Naive thymus-derived CD4-positive, alpha-beta T cell (primary cell): ENCODE measurements at regions of chr9 and their contacts with region 1.

Region 1: DNA sequence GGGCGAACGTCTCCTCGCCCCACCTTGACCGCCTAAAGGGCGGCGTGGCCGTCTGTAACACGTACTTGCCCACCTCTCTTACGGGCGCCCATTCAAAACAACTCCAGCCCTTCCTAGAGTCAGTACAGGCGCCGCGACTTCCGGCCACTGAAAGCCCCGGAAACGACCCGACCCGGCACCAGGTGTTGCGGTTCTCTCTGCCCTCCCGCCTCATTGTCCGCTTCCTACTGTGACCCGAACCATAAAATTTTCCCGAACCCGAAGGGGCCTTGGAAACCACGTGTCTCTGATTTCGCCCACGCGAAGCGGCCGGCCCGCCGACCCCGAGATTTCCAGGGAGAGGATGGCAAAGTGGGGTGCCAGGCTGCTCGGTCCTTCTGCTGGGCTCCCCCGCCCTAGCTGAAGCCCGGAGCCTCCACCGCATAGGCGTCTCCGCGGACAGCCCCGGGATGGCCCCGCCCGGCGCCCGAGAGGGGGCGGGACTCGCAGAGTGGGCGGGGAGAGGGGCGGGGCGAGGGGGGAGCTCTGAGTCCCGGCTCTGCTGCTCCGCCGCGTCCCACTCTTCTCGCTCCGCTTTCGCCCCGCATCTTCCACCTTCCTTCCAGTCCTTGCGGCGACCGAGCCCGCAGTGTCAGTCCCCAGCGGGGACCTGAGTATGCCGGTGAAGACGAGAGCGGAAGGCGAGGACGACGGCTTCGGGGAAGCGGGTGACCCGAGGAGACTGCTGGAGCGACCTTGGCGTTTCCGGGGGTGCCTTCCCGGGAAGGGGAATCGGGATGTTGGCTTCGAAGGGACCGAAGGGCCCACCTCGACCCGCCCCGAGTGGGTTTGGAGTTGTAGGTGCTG is 684 bp upstream of the PTGES2 start:
- DNase-seq: peak; percentile 81 to 96 (median 93)
- ATAC-seq: peak; percentile 89
- H3K4me3 ChIP-seq: peak overlapping the region; percentile 99
- H3K4me3 Mint-ChIP-seq: peak overlapping the region; percentile 93 to 99 (median 98)
- H3K27ac ChIP-seq: peak overlapping the region; percentile 98
- H3K27ac Mint-ChIP-seq: peak overlapping the region; percentile 97 to 100 (median 99)
- H3K4me1 ChIP-seq: peaks cover 16 to 20% of the 10 kb centered on the region in 2 donors
- H3K4me1 Mint-ChIP-seq: peaks cover 22 to 44% (median 35%) of the 10 kb centered on the region in 7 donors
- H3K27me3 ChIP-seq: no peaks in the 10 kb centered on the region
- H3K27me3 Mint-ChIP-seq: peaks cover 0 to 24% (median 3%) of the 10 kb centered on the region in 5 donors

Region 2: GRCh38 chr9:127770905-127771569 is 357.2 kb before region 1 on chr9:
- CTCF ChIA-PET with region 1: no interaction called
- POLR2A ChIA-PET with region 1: no interaction called
- intact Hi-C with region 1: loop called in 1 of 2 experiments (anchors 10 kb)
- DNase-seq: peak; percentile 85 to 99 (median 92)
- ATAC-seq: peak; percentile 92
- H3K4me3 ChIP-seq: peak overlapping the region; percentile 71
- H3K4me3 Mint-ChIP-seq: peak overlapping the region; percentile 74 to 92 (median 86)
- H3K27ac ChIP-seq: peak overlapping the region; percentile 90
- H3K27ac Mint-ChIP-seq: peak overlapping the region; percentile 90 to 96 (median 94)
- H3K4me1 ChIP-seq: peaks cover 57 to 59% of the 10 kb centered on the region in 2 donors
- H3K4me1 Mint-ChIP-seq: peaks cover 44 to 82% (median 71%) of the 10 kb centered on the region in 7 donors
- H3K27me3 ChIP-seq: no peaks in the 10 kb centered on the region
- H3K27me3 Mint-ChIP-seq: no peaks in the 10 kb centered on the region

Region 3: GRCh38 chr9:127970401-127971313 is 157.6 kb before region 1 on chr9:
- CTCF ChIA-PET with region 1: no interaction called
- POLR2A ChIA-PET with region 1: no interaction called
- intact Hi-C with region 1: loop called in 1 of 2 experiments (anchors 2 kb)
- DNase-seq: peak in 8 of 9 donors; percentile 68 to 84 (median 80)
- ATAC-seq: peak; percentile 72
- H3K4me3 ChIP-seq: peak overlapping the region; percentile 93
- H3K4me3 Mint-ChIP-seq: peak overlapping the region; percentile 89 to 99 (median 96)
- H3K27ac ChIP-seq: peak overlapping the region; percentile 84
- H3K27ac Mint-ChIP-seq: peak overlapping the region; percentile 90 to 99 (median 97)
- H3K4me1 ChIP-seq: peaks cover 61 to 93% of the 10 kb centered on the region in 2 donors
- H3K4me1 Mint-ChIP-seq: peaks cover 69 to 95% (median 83%) of the 10 kb centered on the region in 7 donors
- H3K27me3 ChIP-seq: no peaks in the 10 kb centered on the region
- H3K27me3 Mint-ChIP-seq: no peaks in the 10 kb centered on the region

Region 4: GRCh38 chr9:128149001-128149701 is 20.9 kb after region 1 on chr9 and contains the start of gene LCN2:
- CTCF ChIA-PET with region 1: no interaction called
- POLR2A ChIA-PET with region 1: no interaction called
- intact Hi-C with region 1: no loop called
- DNase-seq: no peak
- ATAC-seq: no peak
- H3K4me3 ChIP-seq: no peak within 1 kb of the TSS
- H3K4me3 Mint-ChIP-seq: no peak within 1 kb of the TSS
- H3K27ac ChIP-seq: no peak within 1 kb of the TSS
- H3K27ac Mint-ChIP-seq: peak within 1 kb of the TSS in 3 of 9 donors; percentile 38 to 62 (median 40)
- H3K4me1 ChIP-seq: no peaks in the 10 kb centered on the region
- H3K4me1 Mint-ChIP-seq: peaks cover 0 to 7% (median 4%) of the 10 kb centered on the region in 7 donors
- H3K27me3 ChIP-seq: no peaks in the 10 kb centered on the region
- H3K27me3 Mint-ChIP-seq: peaks cover 0 to 4% (median 0%) of the 10 kb centered on the region in 5 donors
- total RNA-seq, gene LCN2: not detected

Region 5: DNA sequence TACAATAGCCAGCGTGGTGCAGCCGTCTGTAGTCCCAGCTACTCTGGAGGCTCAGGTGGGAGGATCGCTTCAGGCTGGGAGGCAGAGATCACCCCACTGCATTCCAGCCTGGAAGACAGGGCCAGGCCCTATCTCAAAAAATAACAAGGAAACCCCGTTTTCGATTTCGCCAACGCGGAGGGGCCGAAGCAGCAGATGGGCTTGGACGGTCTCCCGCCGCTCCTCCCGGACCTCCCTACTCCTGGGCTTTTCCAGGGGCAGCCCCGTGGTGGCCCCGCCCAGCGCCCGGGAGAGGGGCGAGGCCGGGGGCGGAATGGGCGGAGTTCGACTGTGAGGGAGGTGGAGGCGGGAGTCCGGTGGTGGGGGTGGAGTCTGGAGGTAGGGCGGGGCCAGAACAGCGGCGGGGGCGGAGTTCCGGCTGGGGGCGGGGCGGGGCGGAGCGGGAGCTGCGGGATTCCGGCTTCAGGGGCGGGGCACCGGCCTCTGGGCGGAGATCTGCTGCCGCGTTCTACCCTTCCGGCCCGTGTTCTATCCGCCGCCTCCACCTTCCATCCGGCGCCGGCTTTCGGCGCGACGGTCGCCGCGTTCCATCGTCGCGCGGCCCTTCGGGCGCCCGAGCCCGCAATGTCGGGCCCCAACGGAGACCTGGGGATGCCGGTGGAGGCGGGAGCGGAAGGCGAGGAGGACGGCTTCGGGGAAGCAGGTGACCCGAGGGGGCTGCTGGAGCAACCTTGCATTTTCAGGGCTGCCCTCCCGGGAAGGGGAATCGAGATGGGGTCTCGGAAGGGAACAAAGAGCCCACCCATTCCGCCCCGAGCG is 31.8 kb after region 1 on chr9 and contains the start of gene BBLN:
- CTCF ChIA-PET with region 1: interaction called, 3 read pairs
- POLR2A ChIA-PET with region 1: interaction called, 27 read pairs
- intact Hi-C with region 1: loop called (anchors 1 kb)
- DNase-seq: peak; percentile 78 to 94 (median 87)
- ATAC-seq: peak; percentile 94
- H3K4me3 ChIP-seq: peak within 1 kb of the TSS; percentile 97
- H3K4me3 Mint-ChIP-seq: peak within 1 kb of the TSS; percentile 79 to 90 (median 82)
- H3K27ac ChIP-seq: peak within 1 kb of the TSS; percentile 78
- H3K27ac Mint-ChIP-seq: peak within 1 kb of the TSS; percentile 84 to 95 (median 93)
- H3K4me1 ChIP-seq: peaks cover 11 to 12% of the 10 kb centered on the region in 2 donors
- H3K4me1 Mint-ChIP-seq: peaks cover 0 to 28% (median 21%) of the 10 kb centered on the region in 7 donors
- H3K27me3 ChIP-seq: no peaks in the 10 kb centered on the region
- H3K27me3 Mint-ChIP-seq: no peaks in the 10 kb centered on the region
- total RNA-seq, gene BBLN: 42.7 to 87.8 (median 48.0) TPM

Region 6: GRCh38 chr9:128249908-128250838 is 122.0 kb after region 1 on chr9:
- CTCF ChIA-PET with region 1: no interaction called
- POLR2A ChIA-PET with region 1: interaction called, 4 read pairs
- intact Hi-C with region 1: loop called in 1 of 2 experiments (anchors 1 kb)
- DNase-seq: peak; percentile 96 to 100 (median 98)
- ATAC-seq: peak; percentile 98
- H3K4me3 ChIP-seq: peak overlapping the region; percentile 83
- H3K4me3 Mint-ChIP-seq: peak overlapping the region; percentile 79 to 93 (median 88)
- H3K27ac ChIP-seq: peak overlapping the region; percentile 72
- H3K27ac Mint-ChIP-seq: peak overlapping the region; percentile 60 to 97 (median 95)
- H3K4me1 ChIP-seq: peaks cover 7 to 9% of the 10 kb centered on the region in 2 donors
- H3K4me1 Mint-ChIP-seq: peaks cover 7 to 28% (median 17%) of the 10 kb centered on the region in 7 donors
- H3K27me3 ChIP-seq: no peaks in the 10 kb centered on the region
- H3K27me3 Mint-ChIP-seq: peaks cover 0 to 39% (median 6%) of the 10 kb centered on the region in 5 donors

Region 7: DNA sequence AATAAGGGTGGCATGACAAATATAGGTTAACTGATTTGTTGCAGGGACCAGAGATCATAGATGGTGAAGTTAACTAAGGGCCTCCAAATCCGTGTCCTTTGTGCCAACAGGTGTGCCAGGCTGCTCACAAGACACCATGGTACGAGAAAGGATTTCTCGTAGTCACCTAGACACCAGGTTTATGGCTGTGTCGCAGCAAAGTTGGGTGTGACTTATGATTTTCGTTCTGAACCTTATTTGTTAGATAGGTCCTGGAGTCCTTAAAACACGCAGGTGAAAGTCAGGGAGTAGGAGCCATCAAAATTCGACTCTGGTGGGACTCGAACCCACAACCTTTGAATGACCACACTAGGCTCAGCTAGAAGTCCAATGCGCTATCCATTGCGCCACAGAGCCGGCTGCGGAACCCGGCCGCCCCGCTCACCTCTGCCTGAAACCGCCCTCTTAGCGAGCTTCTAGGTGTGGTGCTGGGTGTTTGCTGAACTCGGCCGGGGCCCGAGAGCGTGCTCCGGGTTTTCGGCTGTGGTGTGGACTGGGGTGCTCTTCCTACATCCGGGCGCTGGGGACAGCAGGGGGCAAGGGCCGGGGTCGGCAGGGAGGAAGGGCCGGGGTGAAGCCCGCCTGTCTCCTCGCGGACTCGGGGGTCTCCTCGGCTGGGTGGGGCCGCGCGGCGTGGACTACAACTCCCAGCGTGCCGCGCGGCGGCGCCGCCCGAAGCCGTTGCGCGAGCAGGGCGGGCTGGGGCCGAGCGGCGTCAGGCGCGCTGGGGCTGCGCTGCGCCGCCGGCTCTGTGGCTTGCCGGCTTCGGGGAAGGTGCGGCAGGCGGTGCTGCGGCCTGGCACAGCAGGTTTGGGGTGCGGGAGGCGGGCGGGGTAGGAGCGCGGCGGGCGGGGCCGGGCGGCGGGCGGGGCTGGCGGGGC is 211.8 kb after region 1 on chr9 and contains the start of gene SLC27A4:
- CTCF ChIA-PET with region 1: interaction called, 4 read pairs
- POLR2A ChIA-PET with region 1: no interaction called
- intact Hi-C with region 1: loop called in 1 of 2 experiments (anchors 2 kb)
- DNase-seq: peak; percentile 75 to 86 (median 82)
- ATAC-seq: peak; percentile 96
- H3K4me3 ChIP-seq: peak within 1 kb of the TSS; percentile 66
- H3K4me3 Mint-ChIP-seq: peak within 1 kb of the TSS; percentile 87 to 98 (median 95)
- H3K27ac ChIP-seq: peak within 1 kb of the TSS; percentile 69
- H3K27ac Mint-ChIP-seq: peak within 1 kb of the TSS; percentile 70 to 93 (median 90)
- H3K4me1 ChIP-seq: peaks cover 4 to 12% of the 10 kb centered on the region in 2 donors
- H3K4me1 Mint-ChIP-seq: peaks cover 6 to 11% (median 9%) of the 10 kb centered on the region in 7 donors
- H3K27me3 ChIP-seq: no peaks in the 10 kb centered on the region
- H3K27me3 Mint-ChIP-seq: no peaks in the 10 kb centered on the region
- total RNA-seq, gene SLC27A4: 6.4 to 20.1 (median 12.1) TPM